ENCODE measurements at regions of chr3 and their contacts with region 1.

Region 1: GRCh38 chr3:114942773-114943172 is 204.3 kb downstream of the ZBTB20 start:
- DNase-seq: no peak
- ATAC-seq: no peak
- H3K4me3 Mint-ChIP-seq: no peak overlapping the region
- H3K27ac Mint-ChIP-seq: no peak overlapping the region
- H3K4me1 Mint-ChIP-seq: peaks cover 2% of the 10 kb centered on the region
- H3K27me3 Mint-ChIP-seq: no peaks in the 10 kb centered on the region

Region 2: GRCh38 chr3:114850898-114851297 is 91.9 kb before region 1 on chr3:
- CTCF ChIA-PET with region 1: no interaction called
- POLR2A ChIA-PET with region 1: no interaction called
- intact Hi-C with region 1: no loop called
- DNase-seq: peak; percentile 5
- ATAC-seq: no peak
- H3K4me3 Mint-ChIP-seq: no peak overlapping the region
- H3K27ac Mint-ChIP-seq: no peak overlapping the region
- H3K4me1 Mint-ChIP-seq: peaks cover 2% of the 10 kb centered on the region
- H3K27me3 Mint-ChIP-seq: no peaks in the 10 kb centered on the region

Region 3: GRCh38 chr3:114953800-114954199 is 11.0 kb after region 1 on chr3:
- CTCF ChIA-PET with region 1: no interaction called
- POLR2A ChIA-PET with region 1: no interaction called
- intact Hi-C with region 1: loop called (anchors 1 kb)
- DNase-seq: no peak
- ATAC-seq: no peak
- H3K4me3 Mint-ChIP-seq: no peak overlapping the region
- H3K27ac Mint-ChIP-seq: no peak overlapping the region
- H3K4me1 Mint-ChIP-seq: no peaks in the 10 kb centered on the region
- H3K27me3 Mint-ChIP-seq: no peaks in the 10 kb centered on the region

Region 4: DNA sequence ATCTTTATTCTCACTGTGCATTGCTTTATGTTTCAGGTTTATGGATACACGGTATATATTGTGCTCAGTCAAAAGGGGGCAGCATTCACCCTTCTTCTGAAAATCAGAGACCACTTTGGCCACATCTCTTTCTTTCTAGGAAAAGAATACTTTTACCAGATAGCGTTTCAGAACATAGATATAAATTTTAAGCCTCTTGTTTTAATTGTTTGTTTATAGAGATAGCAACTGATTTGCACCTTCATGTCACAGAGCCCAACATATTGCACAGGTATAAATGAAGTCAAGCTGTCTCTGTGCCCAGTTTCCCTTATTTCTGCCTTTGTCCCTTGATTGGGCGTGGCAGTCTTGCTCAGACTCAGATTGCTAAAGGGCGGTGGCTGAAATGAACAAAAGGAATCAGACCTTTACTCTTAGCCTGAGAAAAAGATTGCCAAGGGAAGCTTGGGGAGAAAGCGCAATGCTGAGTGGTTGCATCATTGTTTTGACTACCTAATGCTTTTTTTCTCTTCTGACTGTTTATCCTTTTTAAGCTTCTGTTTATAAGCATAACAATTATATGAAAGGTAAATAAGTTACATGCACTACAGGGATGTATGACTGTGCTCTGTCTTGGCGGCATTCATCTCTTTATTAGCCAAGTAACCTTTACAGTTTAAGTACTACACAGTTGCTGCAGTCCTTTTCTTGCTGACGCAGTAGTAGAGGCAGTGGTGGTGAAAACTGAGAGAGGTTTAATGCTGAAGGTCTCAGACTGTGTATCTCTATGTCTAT is 275.1 kb after region 1 on chr3:
- CTCF ChIA-PET with region 1: no interaction called
- POLR2A ChIA-PET with region 1: no interaction called
- intact Hi-C with region 1: no loop called
- DNase-seq: peak; percentile 32
- ATAC-seq: no peak
- H3K4me3 Mint-ChIP-seq: no peak overlapping the region
- H3K27ac Mint-ChIP-seq: no peak overlapping the region
- H3K4me1 Mint-ChIP-seq: no peaks in the 10 kb centered on the region
- H3K27me3 Mint-ChIP-seq: peaks cover 1% of the 10 kb centered on the region